ENCODE measurements at regions of chr18 and their contacts with region 1.

Region 1: GRCh38 chr18:62744076-62744968 is 29.0 kb downstream of the PHLPP1 start:
- DNase-seq: no peak
- ATAC-seq: no peak
- H3K4me3 ChIP-seq: no peak overlapping the region
- H3K4me3 Mint-ChIP-seq: no peak overlapping the region
- H3K27ac ChIP-seq: no peak overlapping the region
- H3K27ac Mint-ChIP-seq: no peak overlapping the region
- H3K4me1 ChIP-seq: no peaks in the 10 kb centered on the region
- H3K4me1 Mint-ChIP-seq: peaks cover 12 to 17% (median 16%) of the 10 kb centered on the region in 3 donors
- H3K27me3 ChIP-seq: no peaks in the 10 kb centered on the region
- H3K27me3 Mint-ChIP-seq: no peaks in the 10 kb centered on the region

Region 2: DNA sequence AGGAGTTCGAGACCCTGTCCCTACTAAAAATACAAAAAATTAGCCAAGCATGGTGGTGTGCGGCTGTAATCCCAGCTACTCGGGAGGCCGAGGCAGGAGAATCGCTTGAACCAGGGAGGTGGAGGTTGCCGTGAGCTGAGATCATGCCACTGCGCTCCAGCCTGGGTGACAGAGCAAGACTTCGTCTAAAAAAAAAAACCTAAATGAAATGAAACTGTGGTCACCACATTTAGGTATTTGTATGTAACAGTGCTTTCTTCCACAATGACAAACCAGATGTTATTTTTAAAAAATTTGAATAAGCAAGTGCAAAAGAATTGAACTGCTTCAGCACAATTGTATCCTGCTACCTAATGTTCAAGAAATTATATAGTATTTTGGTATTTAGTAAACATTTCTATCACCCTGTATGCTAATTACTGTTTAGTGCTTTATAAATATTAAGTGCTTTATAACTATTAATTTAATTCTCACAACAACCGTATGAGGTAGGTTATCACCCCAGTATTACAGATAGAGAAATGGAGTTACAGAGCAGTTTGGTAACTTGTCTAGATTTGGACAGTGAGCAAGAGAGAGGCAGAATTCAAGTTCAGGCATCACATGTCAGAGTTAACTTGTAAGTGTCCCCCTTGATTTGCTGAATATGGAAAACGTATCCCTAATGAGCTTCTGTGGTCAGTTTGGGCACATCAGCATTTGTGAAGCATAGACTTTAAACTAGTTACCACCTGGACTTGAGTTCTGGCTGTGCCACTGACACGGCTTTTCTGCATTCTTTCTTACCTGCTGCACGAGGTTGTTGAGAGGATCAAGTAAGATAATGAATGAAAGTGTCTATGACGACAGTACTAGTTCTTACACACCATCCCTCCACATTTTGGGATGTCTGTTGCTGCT is 14.6 kb before region 1 on chr18:
- CTCF ChIA-PET with region 1: no interaction called
- POLR2A ChIA-PET with region 1: interaction called in 1 of 2 experiments, 10 read pairs
- DNase-seq: no peak
- ATAC-seq: no peak
- H3K4me3 ChIP-seq: no peak overlapping the region
- H3K4me3 Mint-ChIP-seq: no peak overlapping the region
- H3K27ac ChIP-seq: no peak overlapping the region
- H3K27ac Mint-ChIP-seq: no peak overlapping the region
- H3K4me1 ChIP-seq: no peaks in the 10 kb centered on the region
- H3K4me1 Mint-ChIP-seq: no peaks in the 10 kb centered on the region
- H3K27me3 ChIP-seq: no peaks in the 10 kb centered on the region
- H3K27me3 Mint-ChIP-seq: no peaks in the 10 kb centered on the region